Thyroid gland (tissue), 4 donors: ENCODE measurements at regions of chr11 and their contacts with region 1.

Region 1: DNA sequence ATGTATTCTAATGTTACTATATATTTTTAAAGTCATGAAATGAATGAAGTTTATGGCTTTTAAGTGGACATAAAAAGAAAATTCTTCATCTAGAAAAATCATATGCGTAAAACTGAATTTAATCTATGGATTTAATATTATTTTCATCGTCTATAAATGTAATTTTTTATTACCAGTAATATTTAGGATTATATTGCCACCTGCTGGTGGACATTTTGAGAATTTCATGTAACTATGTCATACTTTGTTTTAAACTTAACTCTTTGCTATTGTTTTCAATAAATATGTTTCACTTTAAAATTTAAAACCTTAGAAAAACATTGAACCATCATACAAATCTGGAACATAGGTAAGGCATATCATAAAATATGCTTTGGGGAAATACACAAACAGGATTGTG is 66.5 kb upstream of the CEP126 start:
- DNase-seq: no peak
- H3K4me3 ChIP-seq: no peak overlapping the region
- H3K27ac ChIP-seq: no peak overlapping the region
- H3K4me1 ChIP-seq: no peaks in the 10 kb centered on the region
- H3K27me3 ChIP-seq: no peaks in the 10 kb centered on the region
- CTCF ChIP-seq: peak in 5 of 6 experiments; percentile 7 to 55 (median 48)
- POLR2A ChIP-seq: no peak

Region 2: DNA sequence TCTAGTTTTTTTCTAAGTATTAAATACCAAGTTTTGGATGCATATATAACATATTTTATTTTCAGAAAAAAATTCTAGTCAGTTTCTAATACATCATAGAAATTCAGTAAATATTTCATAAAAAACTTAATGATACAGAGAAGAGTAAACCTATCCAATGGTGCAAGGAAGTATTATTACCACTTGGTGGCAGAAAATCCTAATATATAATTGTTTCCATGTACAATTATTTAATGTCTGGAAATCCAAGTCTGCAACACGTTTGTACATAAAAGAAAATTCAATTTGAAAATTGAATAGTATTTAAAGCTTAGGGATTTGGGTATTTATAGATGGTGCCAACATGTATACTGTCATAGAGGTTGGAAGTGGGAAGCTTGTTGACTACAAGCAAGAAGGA is 391.4 kb before region 1 on chr11:
- intact Hi-C with region 1: loop called (anchors 5 kb)
- DNase-seq: no peak
- H3K4me3 ChIP-seq: no peak overlapping the region
- H3K27ac ChIP-seq: no peak overlapping the region
- H3K4me1 ChIP-seq: no peaks in the 10 kb centered on the region
- H3K27me3 ChIP-seq: no peaks in the 10 kb centered on the region
- CTCF ChIP-seq: peak; percentile 11 to 70 (median 44)
- POLR2A ChIP-seq: no peak